ENCODE measurements at regions of chr6 and their contacts with region 1.

Region 1: GRCh38 chr6:7006515-7007191 is 101.1 kb upstream of the RREB1 start:
- DNase-seq: no peak
- ATAC-seq: no peak
- H3K4me3 ChIP-seq: no peak overlapping the region
- H3K27ac ChIP-seq: no peak overlapping the region
- H3K4me1 ChIP-seq: no peaks in the 10 kb centered on the region
- CTCF ChIP-seq: no peak
- EP300 ChIP-seq: no peak
- POLR2A ChIP-seq: no peak
- RAD21 ChIP-seq: no peak

Region 2: GRCh38 chr6:6742535-6742934 is 264.1 kb before region 1 on chr6:
- CTCF ChIA-PET with region 1: no interaction called
- POLR2A ChIA-PET with region 1: interaction called, 10 read pairs
- DNase-seq: no peak
- ATAC-seq: no peak
- H3K4me3 ChIP-seq: no peak overlapping the region
- H3K27ac ChIP-seq: no peak overlapping the region
- H3K4me1 ChIP-seq: no peaks in the 10 kb centered on the region
- CTCF ChIP-seq: no peak
- EP300 ChIP-seq: no peak
- POLR2A ChIP-seq: no peak
- RAD21 ChIP-seq: no peak

Region 3: GRCh38 chr6:6918216-6918983 is 88.3 kb before region 1 on chr6:
- CTCF ChIA-PET with region 1: no interaction called
- POLR2A ChIA-PET with region 1: no interaction called
- DNase-seq: peak in 1 of 2 experiments; percentile 44
- ATAC-seq: no peak; a peak in 1 of 6 replicates
- H3K4me3 ChIP-seq: no peak overlapping the region
- H3K27ac ChIP-seq: no peak overlapping the region
- H3K4me1 ChIP-seq: 0 out of 3 replicates have a peak, but pooled peaks cover 5% of the 10 kb centered on the region
- CTCF ChIP-seq: no peak
- EP300 ChIP-seq: no peak
- POLR2A ChIP-seq: no peak
- RAD21 ChIP-seq: no peak

Region 4: GRCh38 chr6:7073821-7074525 is 67.3 kb after region 1 on chr6:
- CTCF ChIA-PET with region 1: no interaction called
- POLR2A ChIA-PET with region 1: no interaction called
- DNase-seq: no peak
- ATAC-seq: no peak
- H3K4me3 ChIP-seq: no peak overlapping the region
- H3K27ac ChIP-seq: no peak overlapping the region
- H3K4me1 ChIP-seq: no peaks in the 10 kb centered on the region
- CTCF ChIP-seq: no peak
- EP300 ChIP-seq: no peak
- POLR2A ChIP-seq: no peak
- RAD21 ChIP-seq: no peak